ENCODE measurements at regions of chr7 and their contacts with region 1.

Region 1: GRCh38 chr7:100346921-100347320 is 11.0 kb upstream of the PILRB start:
- DNase-seq: no peak
- H3K4me3 ChIP-seq: no peak overlapping the region
- CTCF ChIP-seq: no peak

Region 2: DNA sequence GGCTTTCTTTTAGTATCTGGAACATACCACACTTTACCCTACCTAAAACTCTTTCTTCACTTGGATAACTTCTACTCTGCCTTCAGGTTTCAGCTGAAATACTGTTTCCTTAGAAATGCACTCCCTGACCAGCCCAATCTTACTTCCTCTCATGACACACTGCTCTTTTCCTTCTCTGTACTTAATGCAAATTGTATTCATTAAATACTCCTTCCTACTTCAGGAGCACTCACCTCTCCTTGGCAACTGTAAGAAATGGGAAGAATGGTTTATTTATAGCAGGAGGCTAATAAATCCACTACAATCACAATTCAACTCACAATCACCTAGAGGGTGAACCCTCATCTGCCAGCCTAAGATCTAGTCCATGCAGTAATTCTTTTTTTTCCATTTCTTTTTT is 66.4 kb after region 1 on chr7:
- in situ Hi-C with region 1: loop called (anchors 5 kb)
- DNase-seq: no peak
- H3K4me3 ChIP-seq: no peak overlapping the region
- CTCF ChIP-seq: no peak

Measured in astrocyte of the cerebellum (primary cell).